HCT116 (cell line): ENCODE measurements at regions of chr19 and their contacts with region 1.

Region 1: DNA sequence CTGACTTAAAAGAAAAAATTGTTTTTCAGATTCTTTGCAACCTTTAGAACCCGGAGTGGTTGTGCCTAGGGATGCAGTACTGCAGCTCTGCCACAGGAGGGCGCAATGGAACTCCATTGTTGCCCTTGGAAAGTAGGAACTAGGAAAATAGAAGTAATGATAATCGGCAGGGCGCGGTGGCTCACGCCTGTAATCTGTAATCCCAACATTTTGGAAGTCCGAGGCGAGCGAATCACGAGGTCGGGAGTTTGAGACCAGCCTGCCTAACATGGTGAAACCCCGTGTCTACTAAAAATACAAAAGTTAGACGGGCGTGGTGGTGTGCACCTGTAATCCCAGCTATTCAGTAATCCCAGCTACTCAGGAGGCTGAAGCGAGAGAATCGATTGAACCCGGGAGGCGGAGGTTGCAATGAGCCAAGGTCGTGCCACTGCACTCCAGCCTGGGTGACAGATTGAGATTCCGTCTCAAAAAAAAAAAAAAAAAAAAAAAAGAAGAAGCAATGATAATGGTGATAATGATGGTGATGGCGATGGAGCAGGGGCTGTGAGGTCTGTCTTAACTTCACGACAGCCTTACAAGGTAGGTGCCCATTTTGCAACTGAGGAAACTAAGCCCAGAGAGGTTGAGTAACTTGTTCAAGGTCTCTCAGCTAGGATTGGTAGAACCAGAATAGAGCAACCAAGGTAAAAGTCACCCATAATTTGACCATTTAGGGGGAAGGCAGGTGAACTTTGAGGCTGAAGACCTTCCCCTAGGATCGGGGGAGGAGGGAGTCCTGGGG is 5.5 kb upstream of the ADAMTS10 start:
- DNase-seq: peak; percentile 60
- ATAC-seq: peak; percentile 63
- H3K4me3 ChIP-seq: peak overlapping the region; percentile 23 to 37
- H3K27ac ChIP-seq: no peak overlapping the region
- H3K4me1 ChIP-seq: peaks cover 8 to 30% of the 10 kb centered on the region in 2 experiments
- H3K27me3 ChIP-seq: no peaks in the 10 kb centered on the region
- CTCF ChIP-seq: peak; percentile 86 to 99 (median 97)
- POLR2A ChIP-seq: no peak
- RAD21 ChIP-seq: peak; percentile 75

Region 2: GRCh38 chr19:8641908-8642547 is 26.0 kb after region 1 on chr19:
- CTCF ChIA-PET with region 1: interaction called, 28 read pairs
- POLR2A ChIA-PET with region 1: no interaction called
- RAD21 ChIA-PET with region 1: interaction called, 3 to 4 read pairs
- intact Hi-C with region 1: no loop called
- DNase-seq: peak; percentile 51
- ATAC-seq: peak; percentile 84
- H3K4me3 ChIP-seq: no peak overlapping the region
- H3K27ac ChIP-seq: no peak overlapping the region
- H3K4me1 ChIP-seq: no peaks in the 10 kb centered on the region
- H3K27me3 ChIP-seq: no peaks in the 10 kb centered on the region
- CTCF ChIP-seq: peak; percentile 68 to 76 (median 70); a peak in 5 of 6 replicates
- POLR2A ChIP-seq: no peak
- RAD21 ChIP-seq: peak; percentile 63

Region 3: DNA sequence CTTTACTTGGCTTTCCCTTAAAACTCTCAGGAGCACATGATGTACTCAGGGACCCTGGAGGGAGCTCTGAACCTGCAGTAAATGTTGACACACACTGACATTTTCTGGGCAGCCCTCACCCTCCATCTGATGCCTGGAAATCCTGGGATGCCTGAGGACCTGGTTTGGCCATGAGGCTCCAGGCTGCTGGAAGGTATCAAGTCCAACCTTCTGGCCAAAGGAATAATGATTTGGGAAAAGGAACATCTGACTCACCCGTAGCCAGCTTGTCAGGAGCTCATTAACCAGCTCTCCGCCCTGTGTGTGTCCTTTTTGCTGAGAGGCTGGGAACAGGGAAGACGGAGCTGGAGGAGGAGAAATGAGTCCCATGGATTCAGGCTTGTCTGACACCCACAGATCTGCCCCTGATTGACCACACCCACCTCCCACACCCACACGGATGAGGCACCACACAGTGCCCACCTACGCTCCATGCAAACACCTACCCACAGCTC is 205.8 kb after region 1 on chr19:
- CTCF ChIA-PET with region 1: no interaction called
- POLR2A ChIA-PET with region 1: no interaction called
- RAD21 ChIA-PET with region 1: no interaction called
- intact Hi-C with region 1: no loop called
- DNase-seq: no peak
- ATAC-seq: no peak
- H3K4me3 ChIP-seq: no peak overlapping the region
- H3K27ac ChIP-seq: no peak overlapping the region
- H3K4me1 ChIP-seq: no peaks in the 10 kb centered on the region
- H3K27me3 ChIP-seq: no peaks in the 10 kb centered on the region
- CTCF ChIP-seq: no peak
- POLR2A ChIP-seq: no peak
- RAD21 ChIP-seq: no peak